Esophagus muscularis mucosa (tissue), 4 donors: ENCODE measurements at regions of chr4 and their contacts with region 1.

Region 1: GRCh38 chr4:140523857-140524742 is at the start of gene ELMOD2:
- DNase-seq: peak; percentile 99
- H3K4me3 ChIP-seq: peak within 1 kb of the TSS; percentile 65 to 99 (median 89)
- H3K27ac ChIP-seq: peak within 1 kb of the TSS; percentile 85 to 90 (median 90)
- H3K4me1 ChIP-seq: peaks cover 13 to 20% (median 15%) of the 10 kb centered on the region in 4 donors
- H3K27me3 ChIP-seq: no peaks in the 10 kb centered on the region
- CTCF ChIP-seq: peak; percentile 88 to 94 (median 93)
- EP300 ChIP-seq: no peak
- POLR2A ChIP-seq: peak; percentile 17
- total RNA-seq, gene ELMOD2: 11.2 to 16.2 (median 15.1) TPM

Region 2: GRCh38 chr4:140485939-140486338 is 38.2 kb before region 1 on chr4:
- intact Hi-C with region 1: no loop called
- DNase-seq: no peak
- H3K4me3 ChIP-seq: no peak overlapping the region
- H3K27ac ChIP-seq: no peak overlapping the region
- H3K4me1 ChIP-seq: no peaks in the 10 kb centered on the region
- H3K27me3 ChIP-seq: no peaks in the 10 kb centered on the region
- CTCF ChIP-seq: no peak
- EP300 ChIP-seq: no peak
- POLR2A ChIP-seq: no peak

Region 3: GRCh38 chr4:140756319-140757231 is 232.5 kb after region 1 on chr4 and contains the start of gene TBC1D9:
- intact Hi-C with region 1: loop called (anchors 5 kb)
- DNase-seq: no peak
- H3K4me3 ChIP-seq: peak within 1 kb of the TSS; percentile 84 to 95 (median 92)
- H3K27ac ChIP-seq: peak within 1 kb of the TSS; percentile 88 to 96 (median 94)
- H3K4me1 ChIP-seq: peaks cover 7 to 29% (median 26%) of the 10 kb centered on the region in 4 donors
- H3K27me3 ChIP-seq: no peaks in the 10 kb centered on the region
- CTCF ChIP-seq: peak in 2 of 3 experiments; percentile 8 to 14
- EP300 ChIP-seq: no peak
- POLR2A ChIP-seq: no peak
- total RNA-seq, gene TBC1D9: 15.4 to 23.8 (median 21.3) TPM